ENCODE measurements at regions of chr12 and their contacts with region 1.

Region 1: DNA sequence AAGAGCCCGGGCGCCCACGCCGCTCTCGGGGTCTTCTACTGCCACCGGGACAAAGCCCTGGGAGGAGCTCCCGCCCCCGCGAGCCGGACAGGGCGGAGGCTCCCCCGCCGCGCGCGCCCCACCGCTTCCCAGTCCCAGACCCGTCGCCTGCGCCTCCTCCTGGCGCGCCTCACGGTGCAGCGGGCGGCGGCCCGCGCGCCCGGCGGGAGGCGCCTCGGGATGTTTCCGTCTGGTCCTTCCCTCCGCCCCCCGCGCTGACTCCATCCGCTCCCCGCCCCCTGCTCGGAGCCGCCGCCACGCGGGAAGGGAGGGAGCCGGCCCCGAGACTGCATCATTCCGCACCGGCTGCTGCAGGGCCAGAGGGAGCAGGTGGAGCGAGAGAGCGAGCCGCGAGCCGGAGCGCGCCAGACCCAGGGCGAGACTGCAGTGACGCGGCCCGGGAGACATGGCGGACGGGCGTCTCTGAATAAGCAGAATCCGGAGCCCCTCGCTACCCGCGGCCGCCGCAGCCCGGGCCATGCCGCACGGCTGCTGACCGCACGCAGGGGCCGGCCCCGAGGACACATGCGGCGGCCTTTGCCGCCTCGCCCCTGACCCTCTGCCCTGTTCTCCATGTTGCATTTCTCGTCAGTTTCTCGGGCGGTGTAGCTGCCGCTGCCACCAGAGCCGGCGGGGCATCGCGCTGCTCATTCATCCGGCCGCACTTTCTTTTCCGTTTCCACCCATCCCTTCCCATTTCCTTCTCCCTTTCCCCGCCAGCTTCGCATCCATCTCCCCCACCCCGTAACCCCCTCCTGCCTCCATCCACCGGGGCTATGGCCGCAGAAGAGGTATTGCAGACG is at the start of gene BICD1:
- DNase-seq: peak; percentile 89
- H3K4me3 ChIP-seq: peak within 1 kb of the TSS; percentile 71 to 87 (median 75)
- H3K27ac ChIP-seq: peak within 1 kb of the TSS; percentile 95
- H3K4me1 ChIP-seq: peaks cover 14% of the 10 kb centered on the region
- H3K27me3 ChIP-seq: no peaks in the 10 kb centered on the region
- CTCF ChIP-seq: peak in 1 of 2 donors; percentile 18
- total RNA-seq, gene BICD1: 36.2 to 42.4 TPM

Region 2: DNA sequence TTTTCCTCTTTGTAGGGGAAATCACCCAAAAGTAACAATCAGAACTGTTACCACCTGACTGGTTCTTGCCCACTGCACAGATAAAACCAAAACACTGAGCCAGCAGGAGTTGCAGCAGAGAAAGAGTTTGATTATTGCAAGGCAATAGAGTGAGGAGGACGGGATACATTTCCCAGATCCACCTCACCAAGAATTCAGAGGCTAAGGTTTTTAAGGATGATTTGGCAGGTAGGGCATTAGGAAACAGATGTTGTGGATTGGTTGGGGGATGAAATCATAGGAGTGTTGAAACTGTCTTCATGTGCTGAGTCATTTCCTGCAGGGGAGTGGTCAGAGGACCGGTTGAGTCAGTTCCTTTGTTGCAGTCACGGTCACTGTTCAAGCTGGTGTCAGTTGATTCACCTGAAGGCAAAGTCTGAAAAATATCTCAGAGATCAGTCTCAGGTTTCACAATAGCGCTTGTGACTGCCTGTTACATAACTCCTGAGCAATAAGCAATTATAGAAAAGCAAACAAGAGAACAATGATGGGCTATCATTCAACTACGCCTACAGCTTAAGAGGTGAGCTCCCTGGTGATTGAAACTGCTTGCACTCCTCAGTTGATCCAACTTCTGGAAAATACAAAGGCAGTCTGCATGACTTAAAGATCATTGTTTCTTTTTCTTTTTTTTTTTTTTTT is 357.6 kb before region 1 on chr12:
- CTCF ChIA-PET with region 1: no interaction called
- dilution Hi-C with region 1: no loop called
- in situ Hi-C with region 1: no loop called
- intact Hi-C with region 1: loop called (anchors 5 kb)
- DNase-seq: peak; percentile 100
- H3K4me3 ChIP-seq: no peak overlapping the region
- H3K27ac ChIP-seq: peak overlapping the region; percentile 91
- H3K4me1 ChIP-seq: peaks cover 15% of the 10 kb centered on the region
- H3K27me3 ChIP-seq: no peaks in the 10 kb centered on the region
- CTCF ChIP-seq: no peak

Region 3: GRCh38 chr12:31959161-31959700 is 147.5 kb before region 1 on chr12 and contains the start of gene RESF1:
- CTCF ChIA-PET with region 1: no interaction called
- dilution Hi-C with region 1: no loop called
- in situ Hi-C with region 1: no loop called
- intact Hi-C with region 1: loop called (anchors 5 kb)
- DNase-seq: peak; percentile 83
- H3K4me3 ChIP-seq: peak within 1 kb of the TSS; percentile 74 to 95 (median 84)
- H3K27ac ChIP-seq: peak within 1 kb of the TSS; percentile 67
- H3K4me1 ChIP-seq: peaks cover 12% of the 10 kb centered on the region
- H3K27me3 ChIP-seq: no peaks in the 10 kb centered on the region
- CTCF ChIP-seq: no peak
- total RNA-seq, gene RESF1: 21.0 to 21.3 TPM

Region 4: GRCh38 chr12:32062881-32063280 is 43.9 kb before region 1 on chr12:
- CTCF ChIA-PET with region 1: no interaction called
- dilution Hi-C with region 1: no loop called
- in situ Hi-C with region 1: no loop called
- intact Hi-C with region 1: loop called (anchors 1 kb)
- DNase-seq: no peak
- H3K4me3 ChIP-seq: no peak overlapping the region
- H3K27ac ChIP-seq: no peak overlapping the region
- H3K4me1 ChIP-seq: no peaks in the 10 kb centered on the region
- H3K27me3 ChIP-seq: no peaks in the 10 kb centered on the region
- CTCF ChIP-seq: no peak

Region 5: GRCh38 chr12:32198555-32198954 is 91.8 kb after region 1 on chr12:
- CTCF ChIA-PET with region 1: no interaction called
- dilution Hi-C with region 1: no loop called
- in situ Hi-C with region 1: no loop called
- intact Hi-C with region 1: loop called (anchors 2 kb)
- DNase-seq: peak; percentile 88
- H3K4me3 ChIP-seq: no peak overlapping the region
- H3K27ac ChIP-seq: peak overlapping the region; percentile 71
- H3K4me1 ChIP-seq: peaks cover 19% of the 10 kb centered on the region
- H3K27me3 ChIP-seq: no peaks in the 10 kb centered on the region
- CTCF ChIP-seq: no peak

Region 6: GRCh38 chr12:32312049-32312670 is 205.4 kb after region 1 on chr12:
- CTCF ChIA-PET with region 1: no interaction called
- dilution Hi-C with region 1: no loop called
- in situ Hi-C with region 1: no loop called
- intact Hi-C with region 1: loop called (anchors 1 kb)
- DNase-seq: peak; percentile 45
- H3K4me3 ChIP-seq: no peak overlapping the region
- H3K27ac ChIP-seq: peak overlapping the region; percentile 8
- H3K4me1 ChIP-seq: no peaks in the 10 kb centered on the region
- H3K27me3 ChIP-seq: no peaks in the 10 kb centered on the region
- CTCF ChIP-seq: peak; percentile 29 to 55